Activated CD8-positive, alpha-beta T cell treated with anti-CD3 and anti-CD28 coated beads, Interleukin-2, amount 10 ng/mL, durations not matched to agents 7 days and 5 days (primary cell): ENCODE measurements at regions of chr9 and their contacts with region 1.

Region 1: GRCh38 chr9:126819482-126819881 is 14.6 kb downstream of the ZBTB43 start:
- DNase-seq: no peak
- ATAC-seq: no peak
- H3K4me3 Mint-ChIP-seq: no peak overlapping the region
- H3K27ac Mint-ChIP-seq: no peak overlapping the region
- H3K4me1 Mint-ChIP-seq: peaks cover 18% of the 10 kb centered on the region
- H3K27me3 Mint-ChIP-seq: no peaks in the 10 kb centered on the region

Region 2: DNA sequence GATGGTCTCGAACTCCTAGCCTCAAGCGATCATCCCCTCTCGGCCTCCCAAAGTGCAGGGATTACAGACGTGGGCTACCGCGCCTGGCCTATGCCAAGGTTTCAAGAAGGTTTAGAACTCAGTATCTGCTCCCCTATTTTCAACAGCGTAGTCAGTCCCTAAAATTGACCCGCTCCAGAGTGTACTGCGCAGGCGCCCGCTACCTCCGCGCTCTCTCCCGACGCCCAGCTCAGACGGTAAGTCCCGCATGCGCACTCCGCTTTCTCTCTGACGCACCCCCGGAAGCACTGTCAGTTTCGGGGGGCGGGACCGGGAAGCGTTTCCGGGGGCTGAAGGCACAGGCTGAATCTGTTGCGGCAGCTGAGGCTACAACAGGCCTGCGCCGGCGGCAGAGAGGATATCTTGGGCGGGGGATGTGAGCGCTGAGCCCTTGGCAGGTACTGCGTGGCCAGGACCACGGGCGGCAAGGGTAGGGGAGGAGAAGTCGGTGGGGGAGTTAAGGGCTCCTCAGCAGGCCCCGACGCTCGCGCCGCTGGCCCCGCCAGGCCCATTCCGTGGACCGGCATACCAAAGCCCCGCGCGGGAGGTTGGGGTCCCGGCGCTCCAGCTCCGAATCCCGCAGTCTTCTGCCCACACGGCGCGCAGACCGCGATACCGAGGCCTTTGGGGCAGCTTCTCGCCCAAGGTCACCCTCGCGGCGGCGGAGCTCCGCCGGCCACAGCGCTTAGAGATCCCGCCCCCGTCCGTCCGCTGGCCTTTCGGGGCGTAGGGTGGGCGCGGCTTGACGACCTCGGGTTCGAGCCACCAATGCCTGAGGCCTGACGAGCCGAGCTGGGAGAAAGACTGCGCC is 14.6 kb before region 1 on chr9 and contains the start of gene ZBTB43:
- CTCF ChIA-PET with region 1: interaction called, 6 read pairs
- POLR2A ChIA-PET with region 1: interaction called, 13 read pairs
- DNase-seq: peak; percentile 99
- ATAC-seq: peak; percentile 87
- H3K4me3 Mint-ChIP-seq: peak within 1 kb of the TSS; percentile 83
- H3K27ac Mint-ChIP-seq: peak within 1 kb of the TSS; percentile 96
- H3K4me1 Mint-ChIP-seq: peaks cover 42% of the 10 kb centered on the region
- H3K27me3 Mint-ChIP-seq: no peaks in the 10 kb centered on the region
- total RNA-seq, gene ZBTB43: 13.6 to 19.1 TPM

Region 3: GRCh38 chr9:126830827-126831226 is 11.3 kb after region 1 on chr9:
- CTCF ChIA-PET with region 1: interaction called, 11 read pairs
- POLR2A ChIA-PET with region 1: interaction called, 3 read pairs
- DNase-seq: no peak
- ATAC-seq: peak; percentile 69
- H3K4me3 Mint-ChIP-seq: no peak overlapping the region
- H3K27ac Mint-ChIP-seq: peak overlapping the region; percentile 17
- H3K4me1 Mint-ChIP-seq: peaks cover 38% of the 10 kb centered on the region
- H3K27me3 Mint-ChIP-seq: no peaks in the 10 kb centered on the region